Caco-2 (cell line): ENCODE measurements at regions of chr4 and their contacts with region 1.

Region 1: DNA sequence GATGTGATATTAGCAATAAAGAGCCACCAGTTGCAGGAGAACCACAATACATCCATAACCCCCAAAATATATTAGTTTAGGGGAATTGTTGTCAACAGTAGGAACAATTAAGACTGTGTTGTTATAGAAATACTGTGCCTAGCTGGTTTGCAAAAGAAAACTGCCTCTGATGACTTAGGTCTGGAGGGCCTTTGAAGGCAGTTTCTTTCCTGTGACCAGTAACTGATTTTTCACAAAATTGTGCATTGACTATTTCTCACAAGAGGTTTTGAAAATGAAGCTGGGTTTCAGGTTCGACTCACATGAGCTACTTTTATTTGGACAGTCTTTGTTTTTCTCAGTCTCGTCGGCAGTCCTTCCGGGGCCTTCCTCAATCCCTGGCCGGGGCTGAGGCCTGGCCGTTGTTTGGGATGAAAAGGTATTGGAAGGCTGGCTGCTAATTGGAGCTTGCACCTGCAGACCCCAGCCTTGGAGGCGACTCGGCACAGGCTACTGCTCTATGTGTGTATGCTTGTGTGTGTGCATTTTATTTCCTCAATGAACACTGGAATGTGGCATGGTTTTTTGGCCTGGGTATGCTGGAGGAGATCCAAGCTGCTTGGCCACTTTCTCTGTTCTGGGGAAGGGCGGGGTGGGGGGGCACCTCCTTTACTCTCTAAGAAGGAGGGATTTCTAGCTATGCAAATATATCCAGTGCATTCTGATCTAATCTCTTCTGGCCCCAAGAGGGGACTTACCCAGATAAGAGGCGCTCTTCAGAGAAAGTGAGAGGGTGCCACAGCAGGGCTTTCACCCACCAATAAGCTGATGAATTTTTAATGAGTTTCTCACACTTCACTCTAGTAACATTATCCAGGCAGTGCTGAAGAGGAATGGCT is 49.5 kb upstream of the LNX1 start:
- DNase-seq: peak; percentile 9 to 40
- H3K4me3 ChIP-seq: no peak overlapping the region
- H3K4me3 Mint-ChIP-seq: no peak overlapping the region
- H3K27ac Mint-ChIP-seq: no peak overlapping the region
- H3K4me1 ChIP-seq: peaks cover 39% of the 10 kb centered on the region
- H3K4me1 Mint-ChIP-seq: peaks cover 16% of the 10 kb centered on the region
- H3K27me3 ChIP-seq: no peaks in the 10 kb centered on the region
- H3K27me3 Mint-ChIP-seq: no peaks in the 10 kb centered on the region
- CTCF ChIP-seq: no peak

Region 2: GRCh38 chr4:53520116-53520515 is 120.7 kb before region 1 on chr4:
- CTCF ChIA-PET with region 1: no interaction called
- POLR2A ChIA-PET with region 1: no interaction called
- intact Hi-C with region 1: loop called (anchors 5 kb)
- DNase-seq: no peak
- H3K4me3 ChIP-seq: no peak overlapping the region
- H3K4me3 Mint-ChIP-seq: no peak overlapping the region
- H3K27ac Mint-ChIP-seq: no peak overlapping the region
- H3K4me1 ChIP-seq: peaks cover 11% of the 10 kb centered on the region
- H3K4me1 Mint-ChIP-seq: peaks cover 6% of the 10 kb centered on the region
- H3K27me3 ChIP-seq: no peaks in the 10 kb centered on the region
- H3K27me3 Mint-ChIP-seq: no peaks in the 10 kb centered on the region
- CTCF ChIP-seq: no peak

Region 3: DNA sequence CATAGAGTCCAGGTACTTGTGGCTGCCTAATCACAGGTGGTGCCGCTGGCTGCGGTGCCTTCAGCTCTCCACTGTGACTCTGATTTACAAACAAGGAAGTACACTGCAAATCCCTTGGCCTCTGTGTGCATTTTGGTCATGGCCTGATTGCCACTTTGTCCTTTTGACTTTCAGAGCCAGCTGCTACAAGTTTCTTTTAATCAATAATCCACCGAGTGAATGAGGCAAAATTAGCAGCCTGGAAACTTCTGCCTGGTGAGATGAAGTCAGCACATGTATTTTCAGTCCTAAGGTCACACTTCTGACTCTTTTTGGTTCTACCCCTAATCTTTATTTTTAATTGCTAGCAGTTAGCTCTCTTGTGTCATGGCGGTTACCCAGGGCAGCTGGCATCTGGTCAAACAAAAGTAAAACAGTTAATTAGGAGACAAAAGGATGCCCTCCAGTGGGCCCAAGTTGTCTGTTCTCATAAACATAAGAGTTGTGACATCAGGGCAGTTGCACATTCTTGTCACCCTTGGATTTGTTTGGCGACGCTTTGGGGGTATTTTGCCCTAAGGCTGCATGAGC is 12.8 kb after region 1 on chr4:
- CTCF ChIA-PET with region 1: no interaction called
- POLR2A ChIA-PET with region 1: interaction called, 3 read pairs
- intact Hi-C with region 1: loop called (anchors 1 kb)
- DNase-seq: peak in 1 of 2 experiments; percentile 5
- H3K4me3 ChIP-seq: no peak overlapping the region
- H3K4me3 Mint-ChIP-seq: no peak overlapping the region
- H3K27ac Mint-ChIP-seq: no peak overlapping the region
- H3K4me1 ChIP-seq: 0 out of 2 replicates have a peak, but pooled peaks cover 5% of the 10 kb centered on the region
- H3K4me1 Mint-ChIP-seq: peaks cover 18% of the 10 kb centered on the region
- H3K27me3 ChIP-seq: no peaks in the 10 kb centered on the region
- H3K27me3 Mint-ChIP-seq: no peaks in the 10 kb centered on the region
- CTCF ChIP-seq: no peak

Region 4: GRCh38 chr4:53695540-53696463 is 55.0 kb after region 1 on chr4:
- CTCF ChIA-PET with region 1: interaction called, 7 read pairs
- POLR2A ChIA-PET with region 1: no interaction called
- intact Hi-C with region 1: loop called (anchors 5 kb)
- DNase-seq: no peak
- H3K4me3 ChIP-seq: no peak overlapping the region
- H3K4me3 Mint-ChIP-seq: no peak overlapping the region
- H3K27ac Mint-ChIP-seq: no peak overlapping the region
- H3K4me1 ChIP-seq: no peaks in the 10 kb centered on the region
- H3K4me1 Mint-ChIP-seq: no peaks in the 10 kb centered on the region
- H3K27me3 ChIP-seq: no peaks in the 10 kb centered on the region
- H3K27me3 Mint-ChIP-seq: no peaks in the 10 kb centered on the region
- CTCF ChIP-seq: no peak